ENCODE measurements at regions of chr11 and their contacts with region 1.

Region 1: DNA sequence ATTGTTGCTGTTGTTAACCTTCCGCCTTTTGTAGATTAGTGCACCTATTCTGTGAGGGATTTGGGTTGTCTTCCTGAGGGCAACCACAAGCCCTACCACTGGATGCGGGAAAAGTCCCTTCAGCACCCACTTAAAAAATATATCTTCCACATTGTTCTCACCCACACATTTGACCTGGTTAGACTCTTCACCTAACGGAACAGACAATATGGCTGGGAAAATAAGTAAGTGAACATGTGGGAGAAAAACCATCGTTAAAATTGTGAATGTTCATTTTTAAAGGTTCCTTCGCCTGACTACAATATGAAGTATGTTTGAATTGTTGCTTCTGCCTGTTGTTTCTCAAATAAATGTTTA is 72.0 kb upstream of the MPEG1 start:
- DNase-seq: no peak
- ATAC-seq: no peak
- H3K4me3 ChIP-seq: no peak overlapping the region
- H3K27ac ChIP-seq: no peak overlapping the region
- H3K4me1 ChIP-seq: no peaks in the 10 kb centered on the region
- H3K27me3 ChIP-seq: no peaks in the 10 kb centered on the region
- CTCF ChIP-seq: no peak

Region 2: GRCh38 chr11:59171508-59172322 is 113.0 kb before region 1 on chr11 and contains the start of gene DTX4:
- intact Hi-C with region 1: loop called (anchors 5 kb)
- DNase-seq: peak; percentile 96
- ATAC-seq: peak; percentile 89
- H3K4me3 ChIP-seq: peak within 1 kb of the TSS; percentile 74
- H3K27ac ChIP-seq: peak within 1 kb of the TSS; percentile 82
- H3K4me1 ChIP-seq: peaks cover 11% of the 10 kb centered on the region
- H3K27me3 ChIP-seq: no peaks in the 10 kb centered on the region
- CTCF ChIP-seq: peak; percentile 82
- total RNA-seq, gene DTX4: 43.1 TPM

Region 3: DNA sequence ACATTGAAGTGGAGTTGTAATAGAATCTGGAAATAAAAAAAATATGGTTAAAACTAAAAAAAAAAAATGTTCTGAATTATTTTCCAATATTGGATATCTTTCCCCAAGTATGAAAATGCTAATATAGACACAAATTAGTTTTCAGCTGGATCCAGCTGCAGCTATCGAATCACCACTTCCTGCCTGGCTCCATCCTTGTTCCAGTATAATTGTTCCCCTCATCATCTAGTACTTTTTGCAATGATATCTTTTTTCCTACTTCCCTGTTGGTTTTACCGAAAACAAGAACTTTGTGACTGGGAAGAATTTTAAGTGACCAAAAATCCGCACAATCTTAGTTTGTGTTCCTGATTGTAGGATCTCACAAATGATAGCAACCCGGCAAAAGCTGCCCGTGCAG is 236.0 kb after region 1 on chr11:
- intact Hi-C with region 1: no loop called
- DNase-seq: no peak
- ATAC-seq: no peak
- H3K4me3 ChIP-seq: no peak overlapping the region
- H3K27ac ChIP-seq: no peak overlapping the region
- H3K4me1 ChIP-seq: no peaks in the 10 kb centered on the region
- H3K27me3 ChIP-seq: no peaks in the 10 kb centered on the region
- CTCF ChIP-seq: no peak

Measured in upper lobe of right lung (tissue), 1 donor.